Prostate gland (tissue), 2 donors: ENCODE measurements at regions of chr12 and their contacts with region 1.

Region 1: GRCh38 chr12:119667577-119668323 is at the start of gene PRKAB1:
- DNase-seq: peak; percentile 97
- H3K4me3 ChIP-seq: peak within 1 kb of the TSS; percentile 65 to 87
- H3K27ac ChIP-seq: peak within 1 kb of the TSS; percentile 72 to 81
- H3K4me1 ChIP-seq: no peaks in the 10 kb centered on the region
- H3K27me3 ChIP-seq: no peaks in the 10 kb centered on the region
- CTCF ChIP-seq: peak; percentile 77 to 93 (median 91)
- POLR2A ChIP-seq: peak; percentile 61
- total RNA-seq, gene PRKAB1: 17.3 to 36.7 TPM

Region 2: DNA sequence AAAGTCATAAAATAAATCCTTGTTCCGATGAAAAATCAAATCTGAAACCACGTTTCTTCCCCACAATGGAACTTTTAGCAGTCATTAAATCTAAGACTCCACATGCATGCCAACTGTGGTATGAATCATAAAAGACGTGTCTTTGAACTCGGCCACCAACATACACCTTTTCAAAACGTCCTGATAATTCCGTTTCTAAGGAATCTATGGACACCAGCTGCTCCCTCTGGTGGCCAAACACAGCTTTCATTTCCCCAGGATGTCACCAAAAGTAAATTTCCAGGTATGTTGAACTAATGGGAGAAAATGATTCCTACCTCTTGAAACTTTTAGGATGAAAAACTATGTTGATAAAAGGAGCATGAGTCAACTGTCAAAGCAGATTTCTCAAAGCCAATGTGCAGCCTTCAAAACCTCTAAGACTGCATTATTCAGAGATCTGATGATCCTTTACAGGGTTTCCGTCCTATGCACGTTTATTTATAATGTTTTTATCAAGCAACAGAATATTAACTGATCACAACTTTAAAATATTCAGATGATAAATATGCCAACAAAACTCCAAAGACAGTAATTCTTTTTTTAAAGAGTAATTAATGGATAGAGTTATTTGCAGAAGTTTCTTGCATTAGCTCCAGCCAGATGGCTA is 113.2 kb after region 1 on chr12:
- intact Hi-C with region 1: loop called (anchors 2 kb)
- DNase-seq: peak; percentile 46
- H3K4me3 ChIP-seq: no peak overlapping the region
- H3K27ac ChIP-seq: no peak overlapping the region
- H3K4me1 ChIP-seq: no peaks in the 10 kb centered on the region
- H3K27me3 ChIP-seq: no peaks in the 10 kb centered on the region
- CTCF ChIP-seq: peak; percentile 43 to 81 (median 78)
- POLR2A ChIP-seq: no peak